PC-9 (cell line): ENCODE measurements at regions of chr17 and their contacts with region 1.

Region 1: GRCh38 chr17:61175298-61176142 is 224.1 kb upstream of the TBX2 start:
- DNase-seq: no peak
- H3K4me3 ChIP-seq: no peak overlapping the region
- H3K27ac ChIP-seq: no peak overlapping the region
- H3K4me1 ChIP-seq: no peaks in the 10 kb centered on the region
- H3K27me3 ChIP-seq: no peaks in the 10 kb centered on the region
- CTCF ChIP-seq: no peak

Region 2: DNA sequence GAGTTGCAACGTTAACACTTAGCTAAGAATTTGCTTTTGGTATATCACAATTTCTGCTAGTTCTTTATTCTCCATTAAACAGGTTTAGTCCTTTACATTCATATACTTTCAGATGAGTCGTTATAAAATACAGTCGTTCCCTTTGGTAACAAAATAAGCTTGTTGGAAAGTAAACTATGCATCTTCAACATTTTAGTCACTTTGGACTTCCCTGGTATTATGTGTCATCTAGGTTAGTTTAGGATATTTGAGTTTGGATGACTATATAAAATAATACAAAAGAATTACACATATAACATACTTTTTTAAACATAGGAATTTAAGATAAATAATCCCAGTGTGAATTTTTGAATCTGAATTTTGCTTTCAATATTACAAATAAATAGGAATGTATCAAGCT is 146.3 kb before region 1 on chr17:
- CTCF ChIA-PET with region 1: no interaction called
- POLR2A ChIA-PET with region 1: interaction called, 19 read pairs
- intact Hi-C with region 1: no loop called
- DNase-seq: no peak
- H3K4me3 ChIP-seq: no peak overlapping the region
- H3K27ac ChIP-seq: no peak overlapping the region
- H3K4me1 ChIP-seq: no peaks in the 10 kb centered on the region
- H3K27me3 ChIP-seq: no peaks in the 10 kb centered on the region
- CTCF ChIP-seq: no peak

Region 3: DNA sequence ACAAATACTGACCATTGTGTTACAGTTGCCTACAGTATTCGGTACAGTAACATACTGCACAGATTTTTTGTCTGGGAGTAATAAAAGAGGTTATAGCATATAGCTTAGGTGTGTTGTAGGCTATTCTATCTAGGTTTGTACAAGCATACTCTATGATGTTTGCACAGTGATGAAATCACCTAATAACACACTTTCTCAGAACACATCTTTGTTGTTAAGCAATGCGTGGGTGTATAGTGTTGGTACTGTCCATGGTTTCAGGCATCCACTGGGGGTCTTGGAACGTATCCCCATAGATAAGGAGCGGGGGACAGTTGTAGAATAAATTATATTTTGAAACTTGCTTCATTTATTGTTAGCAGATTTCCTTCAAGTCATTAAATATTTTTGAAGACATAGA is 69.2 kb before region 1 on chr17:
- CTCF ChIA-PET with region 1: no interaction called
- POLR2A ChIA-PET with region 1: interaction called, 10 read pairs
- intact Hi-C with region 1: no loop called
- DNase-seq: no peak
- H3K4me3 ChIP-seq: no peak overlapping the region
- H3K27ac ChIP-seq: no peak overlapping the region
- H3K4me1 ChIP-seq: no peaks in the 10 kb centered on the region
- H3K27me3 ChIP-seq: no peaks in the 10 kb centered on the region
- CTCF ChIP-seq: no peak

Region 4: GRCh38 chr17:61235827-61236197 is 60.3 kb after region 1 on chr17:
- CTCF ChIA-PET with region 1: no interaction called
- POLR2A ChIA-PET with region 1: no interaction called
- intact Hi-C with region 1: no loop called
- DNase-seq: no peak
- H3K4me3 ChIP-seq: no peak overlapping the region
- H3K27ac ChIP-seq: no peak overlapping the region
- H3K4me1 ChIP-seq: 0 out of 2 replicates have a peak, but pooled peaks cover 6% of the 10 kb centered on the region
- H3K27me3 ChIP-seq: no peaks in the 10 kb centered on the region
- CTCF ChIP-seq: no peak

Region 5: GRCh38 chr17:61436273-61436672 is 260.8 kb after region 1 on chr17:
- CTCF ChIA-PET with region 1: interaction called, 16 read pairs
- POLR2A ChIA-PET with region 1: no interaction called
- intact Hi-C with region 1: no loop called
- DNase-seq: no peak
- H3K4me3 ChIP-seq: no peak overlapping the region
- H3K27ac ChIP-seq: no peak overlapping the region
- H3K4me1 ChIP-seq: 0 out of 2 replicates have a peak, but pooled peaks cover 5% of the 10 kb centered on the region
- H3K27me3 ChIP-seq: no peaks in the 10 kb centered on the region
- CTCF ChIP-seq: no peak